Gastrocnemius medialis (tissue), 4 donors: ENCODE measurements at regions of chr1 and their contacts with region 1.

Region 1: GRCh38 chr1:32335790-32336590 is at the start of gene MARCKSL1:
- DNase-seq: peak; percentile 31 to 45
- ATAC-seq: peak; percentile 66 to 68
- H3K4me3 ChIP-seq: peak within 1 kb of the TSS; percentile 58 to 74 (median 66)
- H3K27ac ChIP-seq: peak within 1 kb of the TSS; percentile 29 to 62 (median 51)
- H3K4me1 ChIP-seq: peaks cover 4 to 6% of the 10 kb centered on the region in 2 donors
- H3K27me3 ChIP-seq: no peaks in the 10 kb centered on the region
- CTCF ChIP-seq: no peak
- POLR2A ChIP-seq: peak; percentile 81 to 90
- total RNA-seq, gene MARCKSL1: 0.75 to 2.6 (median 1.5) TPM

Region 2: DNA sequence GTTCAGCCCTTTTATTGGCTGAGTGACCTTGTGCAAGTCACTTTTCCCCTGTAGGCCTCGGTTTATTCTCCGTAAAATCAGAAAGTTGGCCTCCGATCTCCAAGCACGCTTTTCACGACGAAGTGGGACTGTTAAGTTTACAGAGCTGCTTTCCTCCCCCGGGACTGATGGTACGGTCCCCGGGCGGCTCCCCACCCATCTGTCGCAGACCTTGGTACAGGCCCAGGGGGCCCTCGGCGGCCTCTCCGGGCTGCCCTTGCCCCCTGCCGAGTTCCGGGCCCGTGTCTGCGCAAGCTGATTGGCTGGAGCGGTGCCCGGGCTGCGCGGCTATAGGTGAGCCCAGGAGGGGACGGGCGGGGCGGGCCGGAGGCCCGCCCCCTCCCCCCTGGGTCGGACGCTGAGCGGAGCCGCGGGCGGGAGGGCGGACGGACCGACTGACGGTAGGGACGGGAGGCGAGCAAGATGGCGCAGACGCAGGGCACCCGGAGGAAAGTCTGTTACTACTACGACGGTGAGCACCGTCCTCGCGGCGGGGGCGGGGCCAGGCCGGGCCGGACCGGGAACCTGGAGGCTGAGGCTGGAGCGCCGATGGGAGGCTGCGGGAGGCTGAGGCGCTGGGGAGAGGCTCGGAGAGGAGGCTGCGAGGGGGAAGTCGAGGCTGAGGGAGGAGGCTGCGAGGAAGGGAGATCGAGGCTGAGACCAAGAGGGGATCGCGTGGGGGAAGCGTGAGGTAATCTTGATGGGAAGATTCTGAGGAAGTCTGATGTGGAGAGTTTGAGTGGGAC is 44.1 kb before region 1 on chr1 and contains the start of gene HDAC1:
- in situ Hi-C with region 1: no loop called
- intact Hi-C with region 1: loop called (anchors 2 kb)
- DNase-seq: peak; percentile 87 to 96
- ATAC-seq: peak; percentile 89 to 93
- H3K4me3 ChIP-seq: peak within 1 kb of the TSS; percentile 68 to 93 (median 82)
- H3K27ac ChIP-seq: peak within 1 kb of the TSS; percentile 81 to 88 (median 84)
- H3K4me1 ChIP-seq: peaks cover 0 to 3% of the 10 kb centered on the region in 2 donors
- H3K27me3 ChIP-seq: no peaks in the 10 kb centered on the region
- CTCF ChIP-seq: no peak
- POLR2A ChIP-seq: peak; percentile 54 to 66
- total RNA-seq, gene HDAC1: 8.7 to 23.8 (median 11.8) TPM

Region 3: DNA sequence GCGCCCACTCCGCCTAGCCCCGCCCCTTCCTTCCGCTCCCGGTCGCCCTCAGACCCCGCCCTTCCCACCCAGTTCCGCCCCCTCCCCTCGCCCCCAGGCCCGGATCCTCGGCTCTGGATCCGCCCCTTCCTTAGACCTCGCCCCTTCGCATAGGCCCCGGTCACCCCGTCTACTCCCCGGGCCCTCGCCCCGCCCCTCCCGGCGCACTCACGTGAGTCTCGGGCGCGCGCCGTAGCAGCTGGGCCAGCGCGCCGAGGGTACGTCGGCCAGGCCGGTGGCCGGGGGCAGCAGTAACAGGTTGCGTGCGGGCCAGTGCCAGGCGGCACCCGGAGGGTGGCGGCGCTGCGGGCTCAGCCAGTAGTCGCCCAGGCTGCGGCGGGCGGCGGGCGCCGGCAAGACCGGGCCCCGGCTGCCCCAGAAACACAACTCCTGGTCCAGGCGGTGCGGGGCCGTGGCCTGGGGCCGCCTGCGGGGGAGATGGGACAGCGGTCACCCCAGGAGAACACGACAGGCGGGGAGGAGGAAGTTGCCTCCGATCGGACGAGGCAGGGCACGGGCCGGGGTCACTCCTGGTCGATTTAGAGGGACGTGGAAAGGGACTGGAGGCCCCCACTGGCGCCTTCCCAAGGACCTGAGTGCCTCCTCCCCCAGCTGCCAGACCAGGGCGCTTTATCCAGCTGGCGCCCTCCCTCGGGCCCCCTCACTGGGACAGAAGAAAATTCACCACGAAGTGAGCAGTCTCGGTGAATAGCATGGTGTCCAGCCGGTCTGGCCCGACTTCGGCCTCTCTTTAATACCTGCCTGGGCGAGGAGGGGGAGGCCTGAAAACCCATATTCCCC is 15.6 kb after region 1 on chr1:
- in situ Hi-C with region 1: no loop called
- intact Hi-C with region 1: loop called (anchors 1 kb)
- DNase-seq: peak; percentile 94 to 95
- ATAC-seq: peak; percentile 86 to 90
- H3K4me3 ChIP-seq: peak overlapping the region; percentile 65 to 87 (median 78)
- H3K27ac ChIP-seq: peak overlapping the region; percentile 82 to 95 (median 93)
- H3K4me1 ChIP-seq: peaks cover 19 to 24% of the 10 kb centered on the region in 2 donors
- H3K27me3 ChIP-seq: no peaks in the 10 kb centered on the region
- CTCF ChIP-seq: peak in 2 of 5 experiments; percentile 4 to 44
- POLR2A ChIP-seq: peak; percentile 97 to 98

Region 4: GRCh38 chr1:32362474-32363313 is 26.7 kb after region 1 on chr1 and contains the starts of genes FAM229A and TSSK3:
- in situ Hi-C with region 1: no loop called
- intact Hi-C with region 1: loop called (anchors 1 kb)
- DNase-seq: no peak
- ATAC-seq: no peak
- H3K4me3 ChIP-seq: peak within 1 kb of the TSS; percentile 41 to 54 (median 49)
- H3K27ac ChIP-seq: no peak within 1 kb of the TSS
- H3K4me1 ChIP-seq: peaks cover 12% of the 10 kb centered on the region in 2 donors
- H3K27me3 ChIP-seq: no peaks in the 10 kb centered on the region
- CTCF ChIP-seq: peak in 1 of 5 experiments; percentile 1
- POLR2A ChIP-seq: no peak
- total RNA-seq, gene FAM229A: 0.81 to 13.4 (median 2.0) TPM
- total RNA-seq, gene TSSK3: 1.8 TPM in 1 of 4 donors, not detected in the others